ENCODE measurements at regions of chr16 and their contacts with region 1.

Region 1: DNA sequence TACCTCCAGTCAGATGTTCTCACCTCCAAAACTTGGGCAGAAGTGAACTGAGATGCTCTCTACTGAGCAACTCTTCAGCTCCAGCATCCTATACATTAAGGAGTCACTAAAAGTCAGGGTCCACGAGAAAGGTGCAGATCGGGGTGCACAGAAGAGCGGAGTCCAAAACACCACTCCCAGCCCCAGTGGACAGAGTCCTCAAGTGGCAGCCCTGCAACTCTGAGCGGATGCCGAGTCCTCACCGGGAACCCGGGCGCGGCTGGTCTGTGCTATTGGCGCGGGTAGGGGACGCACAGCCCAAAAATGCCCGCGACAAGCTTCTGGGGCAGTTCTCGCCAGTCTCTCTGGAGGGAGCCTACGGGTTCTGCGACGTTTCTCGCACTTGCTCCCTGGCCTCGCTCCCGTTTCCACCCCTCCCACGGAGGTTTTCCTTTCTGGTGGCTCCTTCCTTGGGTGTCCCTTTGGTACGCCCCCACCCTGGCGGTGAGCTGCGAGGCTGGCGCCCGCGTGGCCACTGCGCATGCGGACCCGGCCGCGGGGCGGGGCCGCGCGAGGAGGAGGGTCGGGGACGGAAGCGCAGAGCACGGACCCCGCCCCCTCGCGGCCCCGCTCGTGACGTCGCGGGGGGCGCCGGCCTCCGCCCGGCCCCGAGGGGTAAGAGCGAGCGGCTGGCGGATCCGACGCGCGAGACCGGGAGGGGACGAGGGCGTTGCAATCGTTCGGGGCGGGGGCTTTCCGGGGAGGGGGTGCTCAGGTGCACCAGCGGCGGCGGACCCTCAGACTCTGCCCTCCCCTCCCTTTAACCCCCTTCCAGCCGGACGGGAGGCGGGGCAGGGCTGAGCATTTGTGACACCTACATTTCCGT is at the start of gene TMEM219:
- DNase-seq: peak; percentile 92
- H3K4me3 ChIP-seq: peak within 1 kb of the TSS; percentile 63 to 82 (median 76)
- H3K27ac ChIP-seq: peak within 1 kb of the TSS; percentile 70
- H3K4me1 ChIP-seq: peaks cover 15% of the 10 kb centered on the region
- H3K27me3 ChIP-seq: no peaks in the 10 kb centered on the region
- CTCF ChIP-seq: peak; percentile 27 to 43
- POLR2A ChIP-seq: no peak
- total RNA-seq, gene TMEM219: 99.4 and 110 TPM in 2 replicates

Region 2: DNA sequence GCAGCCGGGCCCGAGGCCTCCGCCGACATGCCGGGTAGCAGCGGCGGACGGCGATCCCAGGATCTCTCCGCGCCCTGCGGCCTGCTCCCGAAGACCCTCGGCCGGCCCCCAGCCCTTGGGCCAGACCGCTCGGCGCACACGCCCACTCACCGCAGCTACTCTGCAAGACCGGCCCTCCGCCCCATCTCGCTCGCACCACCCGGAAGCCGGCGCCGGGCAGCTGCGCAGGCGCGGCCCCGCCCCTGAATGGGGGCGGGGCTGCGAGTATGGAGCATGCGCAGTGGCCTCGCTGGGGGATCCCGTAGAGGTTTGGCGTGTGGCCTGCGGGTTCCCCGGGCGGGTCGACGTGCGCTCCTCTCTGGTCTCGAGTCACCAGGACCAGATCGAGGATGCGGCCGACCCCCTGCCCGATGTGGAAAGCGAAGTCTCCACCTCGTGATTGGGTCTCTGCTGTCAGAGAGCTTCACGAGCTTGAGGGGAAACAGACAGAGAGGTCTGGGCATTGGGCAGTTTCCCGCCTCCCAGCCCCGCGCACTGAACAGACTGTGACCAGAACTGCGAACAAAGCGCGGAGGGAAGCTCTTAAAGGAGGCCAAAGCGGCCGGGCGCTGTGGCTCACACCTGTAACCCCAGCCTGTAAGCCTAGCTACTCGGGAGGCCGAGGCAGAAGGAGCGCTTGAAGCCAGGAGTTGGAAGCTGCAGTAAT is 35.6 kb before region 1 on chr16 and contains the start of gene KCTD13:
- CTCF ChIA-PET with region 1: interaction called, 10 read pairs
- POLR2A ChIA-PET with region 1: no interaction called
- dilution Hi-C with region 1: no loop called
- intact Hi-C with region 1: no loop called
- DNase-seq: peak; percentile 91
- H3K4me3 ChIP-seq: peak within 1 kb of the TSS; percentile 61 to 78 (median 73)
- H3K27ac ChIP-seq: peak within 1 kb of the TSS; percentile 19
- H3K4me1 ChIP-seq: peaks cover 15% of the 10 kb centered on the region
- H3K27me3 ChIP-seq: no peaks in the 10 kb centered on the region
- CTCF ChIP-seq: no peak
- POLR2A ChIP-seq: peak; percentile 93
- total RNA-seq, gene KCTD13: 21.0 and 24.2 TPM in 2 replicates

Region 3: DNA sequence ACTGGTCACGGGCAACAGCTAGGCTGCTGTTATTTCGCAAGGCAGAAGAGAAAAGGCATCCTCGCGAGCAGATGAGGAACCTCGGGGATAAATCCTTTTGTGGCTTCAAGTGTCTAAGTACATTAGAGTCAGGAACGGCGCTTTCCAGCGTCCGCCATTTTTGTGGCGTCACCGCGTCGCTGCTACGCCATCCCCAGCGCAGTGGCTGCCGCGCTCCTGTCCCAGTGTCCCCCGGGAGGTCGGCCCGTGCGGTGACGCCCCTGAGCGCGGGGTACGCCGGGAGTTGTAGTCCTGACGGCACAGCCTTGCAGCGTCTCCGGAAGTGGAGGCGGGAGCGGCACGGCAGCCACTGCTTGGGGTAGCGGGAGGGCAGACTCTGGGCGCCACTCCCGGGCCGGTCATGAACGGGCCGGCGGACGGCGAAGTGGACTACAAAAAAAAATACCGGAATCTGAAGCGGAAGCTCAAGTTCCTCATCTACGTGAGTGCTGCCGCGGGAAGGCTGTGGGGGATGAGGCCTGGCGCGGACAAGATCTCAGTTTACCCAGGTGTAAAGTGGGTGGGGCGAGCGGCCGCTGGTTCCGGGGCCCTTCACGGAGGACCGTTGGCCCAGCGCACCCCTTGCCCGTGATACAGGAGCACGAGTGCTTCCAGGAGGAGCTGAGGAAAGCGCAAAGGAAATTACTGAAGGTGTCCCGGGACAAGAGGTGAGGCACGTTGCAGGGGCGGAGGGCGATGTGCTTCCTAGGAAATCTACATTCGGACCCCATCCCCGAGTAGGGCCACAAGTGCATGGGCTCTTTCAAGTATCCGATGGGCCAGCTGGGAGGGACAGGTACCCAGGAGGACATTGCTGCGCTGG is 34.4 kb after region 1 on chr16 and contains the start of gene INO80E:
- CTCF ChIA-PET with region 1: interaction called, 3 read pairs
- POLR2A ChIA-PET with region 1: no interaction called
- dilution Hi-C with region 1: no loop called
- intact Hi-C with region 1: loop called (anchors 1 kb)
- DNase-seq: peak; percentile 95
- H3K4me3 ChIP-seq: peak within 1 kb of the TSS; percentile 70 to 81 (median 73)
- H3K27ac ChIP-seq: peak within 1 kb of the TSS; percentile 76
- H3K4me1 ChIP-seq: peaks cover 22% of the 10 kb centered on the region
- H3K27me3 ChIP-seq: no peaks in the 10 kb centered on the region
- CTCF ChIP-seq: no peak
- POLR2A ChIP-seq: no peak
- total RNA-seq, gene INO80E: 76.4 and 84.1 TPM in 2 replicates

Region 4: GRCh38 chr16:30005341-30006094 is 43.8 kb after region 1 on chr16:
- CTCF ChIA-PET with region 1: interaction called, 16 read pairs
- POLR2A ChIA-PET with region 1: no interaction called
- dilution Hi-C with region 1: no loop called
- intact Hi-C with region 1: no loop called
- DNase-seq: peak; percentile 11
- H3K4me3 ChIP-seq: no peak overlapping the region
- H3K27ac ChIP-seq: no peak overlapping the region
- H3K4me1 ChIP-seq: no peaks in the 10 kb centered on the region
- H3K27me3 ChIP-seq: peaks cover 9 to 12% of the 10 kb centered on the region in 2 experiments
- CTCF ChIP-seq: peak; percentile 73 to 88
- POLR2A ChIP-seq: no peak

Region 5: DNA sequence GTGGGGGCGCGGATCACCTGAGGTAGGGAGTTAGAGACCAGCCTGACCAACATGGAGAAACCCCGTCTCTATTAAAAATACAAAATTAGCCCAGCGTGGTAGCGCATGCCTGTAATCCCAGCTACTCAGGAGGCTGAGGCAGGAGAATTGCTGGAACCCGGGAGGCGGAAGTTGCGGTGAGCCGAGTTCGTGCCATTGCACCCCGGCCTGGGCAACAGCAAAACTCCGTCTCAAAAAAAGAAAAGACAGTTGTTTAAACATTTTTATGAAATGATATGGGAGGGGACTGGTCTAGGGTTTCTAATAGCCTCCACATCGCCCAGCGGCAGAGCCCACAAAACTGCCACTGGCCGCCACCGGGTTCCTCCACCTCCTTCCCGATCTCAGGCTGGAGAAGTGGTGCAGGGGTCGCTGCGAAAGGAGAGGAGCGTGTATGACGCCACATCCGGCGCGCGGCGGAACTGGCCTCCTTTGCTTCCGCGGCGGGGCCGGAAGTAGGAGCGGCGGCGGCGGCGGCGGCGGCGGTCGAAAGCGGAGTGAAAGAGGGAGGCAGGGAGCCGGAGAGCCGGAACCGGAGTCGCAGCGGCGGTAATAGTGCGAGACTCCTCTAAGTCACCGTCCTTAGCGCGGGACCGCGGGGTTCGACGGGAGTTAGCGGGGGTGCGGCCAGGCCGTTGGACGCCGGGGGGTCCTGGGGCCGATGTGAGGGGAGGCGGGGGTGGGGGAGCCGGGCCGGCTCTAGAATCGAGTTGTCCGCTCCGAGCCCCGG is 114.0 kb after region 1 on chr16 and contains the start of gene PPP4C:
- CTCF ChIA-PET with region 1: no interaction called
- POLR2A ChIA-PET with region 1: no interaction called
- dilution Hi-C with region 1: no loop called
- intact Hi-C with region 1: no loop called
- DNase-seq: peak; percentile 85
- H3K4me3 ChIP-seq: peak within 1 kb of the TSS; percentile 58 to 78 (median 76)
- H3K27ac ChIP-seq: peak within 1 kb of the TSS; percentile 81
- H3K4me1 ChIP-seq: peaks cover 24% of the 10 kb centered on the region
- H3K27me3 ChIP-seq: no peaks in the 10 kb centered on the region
- CTCF ChIP-seq: no peak
- POLR2A ChIP-seq: peak; percentile 97
- total RNA-seq, gene PPP4C: 159 and 167 TPM in 2 replicates